Aorta (tissue), 5 donors: ENCODE measurements at regions of chr19 and their contacts with region 1.

Region 1: DNA sequence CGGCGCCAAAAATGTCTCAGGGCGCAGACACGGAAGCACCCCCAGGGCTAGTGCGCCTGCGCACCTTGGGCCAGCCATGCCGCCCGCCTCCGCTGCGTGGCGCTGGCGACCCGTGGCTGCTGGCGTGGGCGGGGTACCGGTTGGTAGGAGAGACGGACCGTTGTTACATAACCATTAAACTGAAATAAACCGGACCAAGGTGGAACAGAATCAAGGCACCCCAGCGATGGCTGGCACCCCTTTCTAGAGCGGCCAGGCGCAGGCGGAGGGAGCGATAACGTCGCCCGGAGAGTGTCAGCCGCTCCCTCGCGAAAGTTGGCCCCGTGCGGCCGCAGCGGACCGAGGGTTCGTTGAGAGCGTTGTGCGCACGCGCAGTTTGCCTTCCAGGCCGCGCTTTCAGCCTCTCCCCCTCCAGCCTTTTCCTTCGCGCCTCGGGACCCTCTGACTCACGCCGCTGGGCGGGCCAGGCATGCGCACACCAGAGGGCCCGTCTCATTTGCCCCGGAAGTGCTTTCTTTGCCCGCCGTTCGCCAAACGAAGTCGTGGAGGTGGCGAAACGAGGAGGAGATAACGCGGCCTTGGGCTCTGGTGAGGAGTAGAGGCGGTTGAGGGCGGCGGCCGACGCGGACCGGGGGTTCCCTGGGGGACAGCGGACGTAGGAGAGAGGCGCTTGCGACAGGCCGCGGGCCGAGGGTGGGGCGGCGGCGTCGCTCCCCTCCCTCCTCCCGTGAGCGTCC is at the starts of genes PLEKHJ1 and SF3A2:
- DNase-seq: peak; percentile 98 to 99
- ATAC-seq: peak; percentile 96
- H3K4me3 ChIP-seq: peak within 1 kb of the TSS; percentile 85 to 94
- H3K27ac ChIP-seq: peak within 1 kb of the TSS; percentile 36 to 93
- H3K4me1 ChIP-seq: peaks cover 0 to 5% of the 10 kb centered on the region in 2 donors
- H3K27me3 ChIP-seq: no peaks in the 10 kb centered on the region
- total RNA-seq, gene PLEKHJ1: 24.9 to 37.7 TPM
- total RNA-seq, gene SF3A2: 56.1 to 62.2 TPM

Region 2: GRCh38 chr19:2157452-2157851 is 79.0 kb before region 1 on chr19:
- intact Hi-C with region 1: loop called (anchors 2 to 5 kb)
- DNase-seq: no peak
- ATAC-seq: no peak
- H3K4me3 ChIP-seq: no peak overlapping the region
- H3K27ac ChIP-seq: no peak overlapping the region
- H3K4me1 ChIP-seq: no peaks in the 10 kb centered on the region
- H3K27me3 ChIP-seq: no peaks in the 10 kb centered on the region

Region 3: GRCh38 chr19:2168619-2169424 is 67.7 kb before region 1 on chr19:
- intact Hi-C with region 1: loop called in 1 of 2 experiments (anchors 5 kb)
- DNase-seq: peak; percentile 98 to 99
- ATAC-seq: peak; percentile 94
- H3K4me3 ChIP-seq: no peak overlapping the region
- H3K27ac ChIP-seq: peak overlapping the region in 1 of 2 donors; percentile 83
- H3K4me1 ChIP-seq: peaks cover 0 to 4% of the 10 kb centered on the region in 2 donors
- H3K27me3 ChIP-seq: no peaks in the 10 kb centered on the region

Region 4: GRCh38 chr19:2186071-2186846 is 50.2 kb before region 1 on chr19:
- intact Hi-C with region 1: loop called in 1 of 2 experiments (anchors 5 kb)
- DNase-seq: peak; percentile 94 to 95
- ATAC-seq: peak; percentile 92
- H3K4me3 ChIP-seq: no peak overlapping the region
- H3K27ac ChIP-seq: peak overlapping the region; percentile 1 to 48
- H3K4me1 ChIP-seq: no peaks in the 10 kb centered on the region
- H3K27me3 ChIP-seq: no peaks in the 10 kb centered on the region

Region 5: DNA sequence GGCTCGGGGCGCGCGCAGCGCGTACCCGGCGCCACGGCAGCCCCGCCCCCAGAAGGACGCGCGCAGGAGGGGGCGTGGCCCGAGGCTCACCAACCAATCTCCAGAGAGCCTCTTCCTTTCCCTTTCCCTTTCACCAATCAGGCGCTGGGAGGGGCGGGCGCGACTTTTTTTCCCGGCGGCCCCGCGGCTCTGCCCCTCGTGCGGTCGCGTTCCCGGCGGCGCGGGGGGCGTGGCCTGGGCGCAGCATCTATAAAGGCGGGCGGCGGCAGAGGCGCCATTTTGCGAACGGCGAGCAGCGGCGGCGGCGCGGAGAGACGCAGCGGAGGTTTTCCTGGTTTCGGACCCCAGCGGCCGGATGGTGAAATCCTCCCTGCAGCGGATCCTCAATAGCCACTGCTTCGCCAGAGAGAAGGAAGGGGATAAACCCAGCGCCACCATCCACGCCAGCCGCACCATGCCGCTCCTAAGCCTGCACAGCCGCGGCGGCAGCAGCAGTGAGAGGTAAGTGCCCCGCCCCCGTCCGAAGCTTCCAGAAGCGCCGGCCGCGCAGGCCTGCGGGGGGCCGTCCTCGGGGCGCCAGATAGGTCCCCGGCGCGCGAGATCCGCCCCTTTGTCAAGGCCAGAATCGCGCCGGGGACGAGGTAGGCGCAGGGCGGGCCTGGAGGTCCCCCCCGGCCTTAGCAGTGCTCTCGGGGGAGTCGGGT is 32.9 kb after region 1 on chr19:
- intact Hi-C with region 1: loop called (anchors 2 to 5 kb)
- DNase-seq: peak; percentile 99
- ATAC-seq: peak; percentile 92
- H3K4me3 ChIP-seq: peak overlapping the region; percentile 49 to 96
- H3K27ac ChIP-seq: peak overlapping the region in 1 of 2 donors; percentile 93
- H3K4me1 ChIP-seq: no peaks in the 10 kb centered on the region
- H3K27me3 ChIP-seq: no peaks in the 10 kb centered on the region

Region 6: DNA sequence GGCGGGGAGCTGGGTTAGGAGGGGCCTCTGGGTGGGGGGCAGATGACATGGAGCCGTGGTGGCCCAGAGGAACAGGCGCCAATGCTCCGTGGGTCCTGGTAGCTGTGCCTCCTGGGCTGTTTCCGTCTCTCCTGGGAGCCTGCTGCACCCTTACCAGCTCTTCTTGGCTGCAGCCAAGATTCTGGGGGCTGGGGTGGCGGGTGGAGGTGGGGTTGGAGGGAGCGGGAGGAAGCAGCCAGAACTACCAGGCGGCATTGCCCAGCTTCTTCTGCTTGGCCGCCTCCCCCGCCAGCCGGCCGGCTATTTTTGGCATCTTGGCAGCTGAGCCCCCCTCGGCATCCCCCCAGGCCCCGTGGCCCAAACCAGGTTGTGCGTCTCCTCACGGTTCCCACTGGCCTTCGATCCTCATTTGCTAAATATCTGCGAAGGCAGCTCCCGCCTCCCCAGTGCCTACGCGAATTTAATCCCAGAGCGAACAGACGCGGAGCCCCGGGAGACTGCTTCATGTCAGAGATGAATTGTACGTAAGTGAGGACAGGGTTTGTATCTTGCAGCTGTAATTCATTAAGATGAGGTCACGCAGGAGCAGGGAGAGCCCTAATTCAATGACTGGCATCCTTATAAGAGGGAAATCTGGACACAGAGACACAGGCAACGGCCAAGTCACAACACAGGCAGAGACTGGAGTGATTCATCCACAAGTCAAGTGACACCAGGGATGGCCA is 58.3 kb after region 1 on chr19:
- intact Hi-C with region 1: no loop called
- DNase-seq: peak; percentile 54 to 78
- ATAC-seq: peak; percentile 44
- H3K4me3 ChIP-seq: peak overlapping the region in 1 of 2 donors; percentile 22
- H3K27ac ChIP-seq: no peak overlapping the region
- H3K4me1 ChIP-seq: no peaks in the 10 kb centered on the region
- H3K27me3 ChIP-seq: no peaks in the 10 kb centered on the region

Region 7: DNA sequence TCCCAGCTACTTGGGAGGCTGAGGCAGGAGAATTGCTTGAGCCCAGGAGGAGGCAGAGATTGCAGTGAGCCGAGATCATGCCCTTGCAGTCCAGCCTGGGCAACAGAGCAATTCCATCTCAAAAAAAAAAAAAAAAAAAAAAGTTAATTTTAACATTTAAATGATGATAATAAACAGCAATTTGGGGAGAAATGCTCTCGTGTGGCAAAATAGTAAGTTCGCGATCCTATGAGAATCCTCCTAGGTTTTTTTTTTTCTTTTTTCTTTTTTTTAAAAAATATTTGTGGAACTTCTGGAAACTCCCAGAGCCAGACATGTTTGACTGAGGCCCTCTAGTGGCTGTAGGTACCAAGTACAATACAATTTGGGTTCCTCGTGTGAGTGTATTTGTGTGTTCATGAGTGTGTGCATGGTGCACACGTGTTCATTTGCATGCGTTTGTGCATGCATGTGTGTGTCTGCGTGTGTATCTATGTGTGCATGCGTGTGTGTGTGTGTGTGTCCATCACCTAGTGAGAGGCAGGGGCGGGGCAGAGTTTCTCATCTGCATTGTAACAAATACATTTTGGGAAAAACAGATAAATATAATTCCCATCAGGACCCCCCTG is 154.7 kb after region 1 on chr19:
- intact Hi-C with region 1: loop called in 1 of 2 experiments (anchors 5 kb)
- DNase-seq: no peak
- ATAC-seq: peak; percentile 79
- H3K4me3 ChIP-seq: no peak overlapping the region
- H3K27ac ChIP-seq: no peak overlapping the region
- H3K4me1 ChIP-seq: no peaks in the 10 kb centered on the region
- H3K27me3 ChIP-seq: no peaks in the 10 kb centered on the region